ENCODE measurements at regions of chrX and their contacts with region 1.

Region 1: DNA sequence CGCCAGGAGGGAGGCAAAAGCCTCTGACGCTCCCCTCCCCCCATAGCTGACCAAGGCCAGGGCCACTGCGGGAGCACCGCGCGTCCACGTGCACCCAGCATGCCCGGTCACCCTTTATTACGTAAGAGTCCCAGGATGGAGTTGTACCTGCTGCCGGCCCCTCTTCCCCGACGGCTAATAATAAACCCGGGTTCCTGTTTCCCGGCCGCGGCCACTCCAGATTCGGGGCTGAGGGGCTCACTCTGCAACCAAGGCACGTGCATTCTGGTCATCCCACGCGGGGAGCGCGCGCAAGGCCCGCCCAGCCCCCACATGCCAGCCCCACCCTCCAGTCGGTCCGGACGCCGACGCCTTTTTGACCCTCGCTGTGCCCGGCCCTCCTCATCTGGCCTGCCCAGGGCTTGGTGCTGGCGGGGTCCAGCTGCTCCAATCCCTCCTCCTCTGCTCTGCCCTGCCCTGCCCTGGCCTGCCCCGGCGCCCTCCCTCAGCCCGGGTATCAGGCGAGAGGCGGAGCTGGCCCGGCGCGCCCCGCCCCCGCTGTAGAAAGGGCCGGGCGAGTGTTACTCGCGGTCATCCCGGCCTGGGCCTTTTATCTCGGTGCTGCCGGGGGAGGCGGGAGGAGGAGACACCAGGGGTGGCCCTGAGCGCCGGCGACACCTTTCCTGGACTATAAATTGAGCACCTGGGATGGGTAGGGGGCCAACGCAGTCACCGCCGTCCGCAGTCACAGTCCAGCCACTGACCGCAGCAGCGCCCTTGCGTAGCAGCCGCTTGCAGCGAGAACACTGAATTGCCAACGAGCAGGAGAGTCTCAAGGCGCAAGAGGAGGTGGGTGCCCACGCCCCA is 2.5 kb downstream of the MID1IP1 start:
- DNase-seq: peak; percentile 90
- ATAC-seq: peak; percentile 90
- H3K4me3 ChIP-seq: peak overlapping the region; percentile 27 to 40
- H3K27ac ChIP-seq: peak overlapping the region in 1 of 2 donors; percentile 96
- H3K4me1 ChIP-seq: no peaks in the 10 kb centered on the region
- H3K27me3 ChIP-seq: no peaks in the 10 kb centered on the region

Region 2: GRCh38 chrX:38636949-38637819 is 166.6 kb before region 1 on chrX:
- intact Hi-C with region 1: no loop called
- DNase-seq: peak in 1 of 2 donors; percentile 56
- ATAC-seq: no peak
- H3K4me3 ChIP-seq: no peak overlapping the region
- H3K27ac ChIP-seq: no peak overlapping the region
- H3K4me1 ChIP-seq: no peaks in the 10 kb centered on the region
- H3K27me3 ChIP-seq: no peaks in the 10 kb centered on the region

Region 3: GRCh38 chrX:38868941-38869401 is 65.2 kb after region 1 on chrX:
- intact Hi-C with region 1: loop called in 1 of 2 experiments (anchors 5 kb)
- DNase-seq: no peak
- ATAC-seq: peak; percentile 75
- H3K4me3 ChIP-seq: no peak overlapping the region
- H3K27ac ChIP-seq: no peak overlapping the region
- H3K4me1 ChIP-seq: peaks cover 2 to 4% of the 10 kb centered on the region in 2 donors
- H3K27me3 ChIP-seq: no peaks in the 10 kb centered on the region

Region 4: GRCh38 chrX:38929966-38930421 is 126.2 kb after region 1 on chrX:
- intact Hi-C with region 1: loop called (anchors 5 kb)
- DNase-seq: peak in 1 of 2 donors; percentile 60
- ATAC-seq: peak; percentile 81
- H3K4me3 ChIP-seq: no peak overlapping the region
- H3K27ac ChIP-seq: peak overlapping the region; percentile 54 to 95
- H3K4me1 ChIP-seq: peaks cover 0 to 1% of the 10 kb centered on the region in 2 donors
- H3K27me3 ChIP-seq: no peaks in the 10 kb centered on the region

Region 5: GRCh38 chrX:38985375-38985774 is 181.6 kb after region 1 on chrX:
- intact Hi-C with region 1: loop called in 1 of 2 experiments (anchors 10 kb)
- DNase-seq: no peak
- ATAC-seq: no peak
- H3K4me3 ChIP-seq: no peak overlapping the region
- H3K27ac ChIP-seq: no peak overlapping the region
- H3K4me1 ChIP-seq: no peaks in the 10 kb centered on the region
- H3K27me3 ChIP-seq: no peaks in the 10 kb centered on the region

Measured in aorta (tissue), 5 donors.